Right ventricle myocardium superior (tissue), 1 donor: ENCODE measurements at regions of chr7 and their contacts with region 1.

Region 1: DNA sequence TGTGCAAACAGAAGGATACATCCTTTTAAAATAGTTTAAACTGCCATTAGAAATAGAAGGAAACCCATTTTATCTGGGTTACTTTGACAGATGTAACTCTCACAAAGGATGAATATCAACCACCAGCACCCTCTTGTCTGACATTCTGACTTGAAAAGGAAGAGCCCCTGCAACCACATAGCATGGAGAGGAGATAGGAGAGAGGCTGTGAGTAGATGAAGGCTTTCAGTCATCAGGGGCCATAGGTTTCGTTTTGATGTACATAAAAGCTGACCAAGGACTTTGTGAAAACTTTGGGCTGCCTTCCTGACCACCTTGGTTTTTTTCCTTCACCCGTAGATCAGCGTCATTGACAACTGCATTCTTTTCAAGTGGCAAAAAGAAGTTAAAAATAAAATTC is 211.6 kb upstream of the PRPS1L1 start:
- DNase-seq: no peak
- ATAC-seq: no peak

Region 2: GRCh38 chr7:18096087-18096486 is 143.1 kb before region 1 on chr7:
- intact Hi-C with region 1: no loop called
- DNase-seq: no peak
- ATAC-seq: no peak

Region 3: GRCh38 chr7:18320971-18321567 is 81.9 kb after region 1 on chr7:
- intact Hi-C with region 1: loop called (anchors 10 kb)
- DNase-seq: no peak
- ATAC-seq: no peak